Heart left ventricle (tissue), 16 donors: ENCODE measurements at regions of chr15 and their contacts with region 1.

Region 1: DNA sequence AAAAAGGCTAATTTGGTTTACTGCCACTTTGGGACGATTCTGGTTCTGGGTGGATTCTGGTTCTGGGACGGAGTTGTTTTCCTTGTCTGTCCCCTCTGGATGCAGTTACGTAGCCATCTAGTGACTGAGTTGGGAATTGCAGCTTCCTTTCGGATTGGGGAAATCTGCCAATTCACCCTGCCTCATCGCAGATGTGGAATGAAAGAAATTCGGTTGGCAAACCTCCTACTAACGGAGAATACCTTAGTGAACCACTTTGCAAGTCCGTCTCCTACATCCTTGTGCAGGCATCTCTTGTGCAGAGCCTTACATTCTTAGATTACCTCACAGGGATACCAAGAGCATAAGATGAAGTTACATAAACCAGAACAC is 31.5 kb upstream of the AP4E1 start:
- DNase-seq: peak in 4 of 5 donors; percentile 50 to 75 (median 62)
- ATAC-seq: peak; percentile 54 to 86 (median 76)
- H3K4me3 ChIP-seq: peak overlapping the region in 10 of 12 donors; percentile 23 to 60 (median 49)
- H3K27ac ChIP-seq: peak overlapping the region in 5 of 12 donors; percentile 11 to 60 (median 38)
- H3K4me1 ChIP-seq: peaks cover 0 to 59% (median 2%) of the 10 kb centered on the region in 12 donors
- H3K27me3 ChIP-seq: no peaks in the 10 kb centered on the region
- CTCF ChIP-seq: peak; percentile 87 to 98 (median 96)
- POLR2A ChIP-seq: no peak

Region 2: DNA sequence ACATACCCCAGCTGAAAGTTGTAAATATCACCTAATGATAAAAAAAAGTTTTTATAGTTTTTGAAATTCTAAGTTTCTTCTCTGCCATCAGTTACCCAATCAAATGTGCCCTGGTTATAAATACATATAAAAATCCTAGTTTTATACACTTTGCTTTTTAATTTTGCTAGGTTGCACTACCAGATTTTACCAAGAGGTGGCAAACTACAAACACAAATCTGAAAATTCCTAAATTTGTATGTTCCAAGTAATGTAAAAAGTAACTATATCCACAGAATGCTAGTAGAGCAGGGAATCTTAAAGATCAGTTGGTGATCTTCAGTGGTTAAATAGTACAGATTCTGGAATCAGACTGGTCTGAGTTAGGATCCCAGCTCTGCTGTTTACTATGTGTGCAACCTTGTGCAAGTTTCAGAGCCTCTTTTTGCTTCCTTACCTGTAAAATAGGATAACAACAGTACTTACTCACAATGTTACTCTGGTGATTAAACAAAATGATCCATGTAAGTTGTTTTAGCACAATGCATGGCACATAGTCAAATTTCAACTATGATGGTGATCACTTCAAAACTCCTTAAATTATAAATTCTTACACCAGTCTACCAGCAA is 201.3 kb before region 1 on chr15:
- intact Hi-C with region 1: loop called (anchors 1 to 5 kb)
- DNase-seq: no peak
- ATAC-seq: no peak
- H3K4me3 ChIP-seq: no peak overlapping the region
- H3K27ac ChIP-seq: no peak overlapping the region
- H3K4me1 ChIP-seq: peaks cover 0 to 58% (median 23%) of the 10 kb centered on the region in 12 donors
- H3K27me3 ChIP-seq: no peaks in the 10 kb centered on the region
- CTCF ChIP-seq: peak; percentile 69 to 83 (median 78)
- POLR2A ChIP-seq: no peak

Region 3: GRCh38 chr15:50765195-50765973 is 111.6 kb before region 1 on chr15 and contains the start of gene SPPL2A:
- intact Hi-C with region 1: loop called in 6 of 10 experiments (anchors 2 to 10 kb)
- DNase-seq: peak; percentile 87 to 94 (median 91)
- ATAC-seq: peak; percentile 65 to 93 (median 88)
- H3K4me3 ChIP-seq: peak within 1 kb of the TSS; percentile 31 to 97 (median 88)
- H3K27ac ChIP-seq: peak within 1 kb of the TSS; percentile 94 to 99 (median 98)
- H3K4me1 ChIP-seq: peaks cover 0 to 41% (median 19%) of the 10 kb centered on the region in 12 donors
- H3K27me3 ChIP-seq: no peaks in the 10 kb centered on the region
- CTCF ChIP-seq: no peak
- POLR2A ChIP-seq: peak in 1 of 2 donors; percentile 90
- total RNA-seq, gene SPPL2A: 71.3 to 231 (median 122) TPM

Region 4: DNA sequence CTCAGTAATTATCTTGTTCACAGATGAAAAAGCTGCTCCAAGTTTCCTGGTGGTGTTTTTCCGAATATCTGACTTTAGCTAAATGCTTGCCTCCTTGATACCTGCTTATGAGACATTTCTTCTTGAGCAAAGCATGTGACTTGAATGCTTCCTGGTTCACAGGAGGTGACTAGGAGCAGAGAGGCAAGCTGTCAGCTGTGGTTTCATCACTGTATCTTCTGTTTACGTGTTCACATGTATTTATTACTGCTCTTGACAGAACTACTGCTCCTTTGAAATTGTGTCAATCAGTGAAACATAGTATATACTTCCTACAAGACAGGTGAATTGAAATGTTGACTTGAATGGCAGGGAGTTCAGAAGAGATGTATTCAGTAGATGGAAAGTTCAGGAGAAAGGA is 102.5 kb before region 1 on chr15:
- intact Hi-C with region 1: loop called in 4 of 10 experiments (anchors 5 to 10 kb)
- DNase-seq: no peak
- ATAC-seq: peak in 1 of 4 donors; percentile 20
- H3K4me3 ChIP-seq: no peak overlapping the region
- H3K27ac ChIP-seq: no peak overlapping the region
- H3K4me1 ChIP-seq: no peaks in the 10 kb centered on the region
- H3K27me3 ChIP-seq: no peaks in the 10 kb centered on the region
- CTCF ChIP-seq: no peak
- POLR2A ChIP-seq: no peak